BJ (cell line): ENCODE measurements at regions of chr17 and their contacts with region 1.

Region 1: GRCh38 chr17:41648411-41649195 is 24.2 kb upstream of the KRT17 start:
- DNase-seq: no peak
- H3K4me3 ChIP-seq: peak overlapping the region; percentile 36
- H3K27me3 ChIP-seq: no peaks in the 10 kb centered on the region
- CTCF ChIP-seq: peak; percentile 99

Region 2: GRCh38 chr17:40818733-40819527 is 829.7 kb before region 1 on chr17:
- CTCF ChIA-PET with region 1: interaction called, 10 read pairs
- POLR2A ChIA-PET with region 1: no interaction called
- DNase-seq: peak; percentile 10
- H3K4me3 ChIP-seq: peak overlapping the region; percentile 70
- H3K27me3 ChIP-seq: no peaks in the 10 kb centered on the region
- CTCF ChIP-seq: no peak

Region 3: DNA sequence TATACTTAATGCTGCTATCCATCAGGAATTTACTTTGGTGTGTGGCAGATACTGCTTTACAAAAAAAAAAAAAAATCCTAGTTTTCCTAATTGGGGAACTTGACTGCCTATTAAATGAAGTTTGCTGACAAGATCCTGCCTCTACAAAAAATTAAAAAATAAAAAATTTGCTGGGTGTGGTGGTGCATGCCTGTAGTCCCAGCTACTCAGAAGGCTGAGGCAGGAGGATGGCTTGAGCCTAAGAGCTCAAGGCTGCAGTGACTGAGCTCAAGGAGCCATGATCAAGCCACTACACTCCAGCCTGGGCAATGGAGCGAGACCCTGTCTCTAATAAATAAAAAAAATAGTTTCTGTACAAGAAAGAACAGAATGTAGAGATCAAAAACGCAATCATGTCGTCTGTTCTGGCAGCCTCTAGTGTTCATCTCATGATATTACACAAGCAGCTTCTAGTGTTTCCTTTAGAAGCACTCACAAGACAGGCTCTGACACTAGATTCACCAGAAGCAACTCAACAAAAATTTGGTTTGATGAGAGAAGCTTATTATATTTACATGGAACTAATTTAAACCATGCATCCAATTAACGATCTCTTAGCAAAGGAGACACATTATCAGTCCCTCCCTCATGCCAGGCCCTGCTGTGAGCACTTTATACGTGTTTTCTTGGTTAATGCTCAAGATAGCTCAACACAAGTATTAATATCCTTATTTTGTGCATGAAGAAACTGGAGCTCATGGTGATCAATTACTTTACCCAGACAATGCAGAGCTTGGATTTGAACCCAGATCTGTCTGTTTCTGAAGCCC is 326.3 kb before region 1 on chr17:
- CTCF ChIA-PET with region 1: interaction called, 14 read pairs
- POLR2A ChIA-PET with region 1: no interaction called
- DNase-seq: peak; percentile 38
- H3K4me3 ChIP-seq: no peak overlapping the region
- H3K27me3 ChIP-seq: no peaks in the 10 kb centered on the region
- CTCF ChIP-seq: peak; percentile 91

Region 4: GRCh38 chr17:41548844-41549595 is 99.6 kb before region 1 on chr17:
- CTCF ChIA-PET with region 1: interaction called, 343 read pairs
- POLR2A ChIA-PET with region 1: interaction called, 12 read pairs
- DNase-seq: no peak
- H3K4me3 ChIP-seq: no peak overlapping the region
- H3K27me3 ChIP-seq: no peaks in the 10 kb centered on the region
- CTCF ChIP-seq: peak; percentile 86

Region 5: GRCh38 chr17:41602524-41602923 is 46.1 kb before region 1 on chr17:
- CTCF ChIA-PET with region 1: interaction called, 14 read pairs
- POLR2A ChIA-PET with region 1: no interaction called
- DNase-seq: no peak
- H3K4me3 ChIP-seq: no peak overlapping the region
- H3K27me3 ChIP-seq: no peaks in the 10 kb centered on the region; the same call in 1 of the 2 replicates
- CTCF ChIP-seq: no peak

Region 6: DNA sequence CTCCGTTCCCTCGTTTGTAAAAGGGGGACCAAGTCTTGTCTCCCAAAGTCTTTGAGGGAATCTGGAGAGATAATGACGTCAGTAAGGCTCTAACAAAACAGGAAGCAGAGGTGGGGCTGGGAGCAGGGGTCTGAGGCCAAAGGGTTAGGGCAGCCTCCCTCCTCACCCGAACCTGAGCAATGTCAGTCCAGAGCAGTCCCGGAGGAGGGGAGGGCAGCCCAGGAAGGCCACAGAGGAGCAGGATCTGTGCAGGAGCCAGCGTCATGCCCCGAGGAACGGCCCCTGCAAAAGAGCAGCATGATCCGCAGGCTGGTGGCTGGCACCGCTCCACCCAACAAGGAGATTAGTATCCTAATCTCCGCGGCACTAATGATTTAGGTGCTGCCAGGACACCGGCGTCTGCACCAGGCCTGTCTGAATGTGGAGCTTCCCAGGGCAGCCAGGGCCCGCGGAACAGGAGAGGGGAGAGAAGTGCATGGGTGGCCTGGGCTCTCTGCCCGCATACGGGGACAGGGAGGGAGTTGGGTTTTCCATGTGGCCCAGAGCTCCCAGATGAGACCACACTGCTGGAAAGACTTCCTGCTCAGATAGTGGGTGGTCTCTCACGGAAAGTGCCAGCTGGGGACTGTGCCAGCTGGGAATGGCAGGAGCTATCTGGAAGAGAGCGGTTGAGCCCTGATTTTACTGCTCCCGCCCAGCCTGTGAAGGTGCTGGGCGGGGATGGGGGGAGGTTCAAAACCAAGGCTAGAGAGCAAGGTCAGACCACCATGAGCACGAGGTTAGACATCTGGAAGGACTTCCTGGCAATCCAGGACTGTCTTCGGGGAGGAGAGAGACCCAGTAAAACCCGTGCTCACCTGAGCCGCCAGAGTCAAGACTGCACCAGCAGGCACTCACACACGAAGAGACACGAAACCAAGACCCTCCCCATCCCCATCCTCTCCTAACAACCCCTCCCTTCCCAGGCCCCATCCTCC is 13.2 kb before region 1 on chr17:
- CTCF ChIA-PET with region 1: interaction called, 24 read pairs
- POLR2A ChIA-PET with region 1: no interaction called
- DNase-seq: no peak
- H3K4me3 ChIP-seq: no peak overlapping the region
- H3K27me3 ChIP-seq: no peaks in the 10 kb centered on the region
- CTCF ChIP-seq: no peak

Region 7: GRCh38 chr17:41695954-41696756 is 47.6 kb after region 1 on chr17:
- CTCF ChIA-PET with region 1: no interaction called
- POLR2A ChIA-PET with region 1: no interaction called
- DNase-seq: no peak
- H3K4me3 ChIP-seq: no peak overlapping the region
- H3K27me3 ChIP-seq: no peaks in the 10 kb centered on the region
- CTCF ChIP-seq: peak; percentile 83

Region 8: DNA sequence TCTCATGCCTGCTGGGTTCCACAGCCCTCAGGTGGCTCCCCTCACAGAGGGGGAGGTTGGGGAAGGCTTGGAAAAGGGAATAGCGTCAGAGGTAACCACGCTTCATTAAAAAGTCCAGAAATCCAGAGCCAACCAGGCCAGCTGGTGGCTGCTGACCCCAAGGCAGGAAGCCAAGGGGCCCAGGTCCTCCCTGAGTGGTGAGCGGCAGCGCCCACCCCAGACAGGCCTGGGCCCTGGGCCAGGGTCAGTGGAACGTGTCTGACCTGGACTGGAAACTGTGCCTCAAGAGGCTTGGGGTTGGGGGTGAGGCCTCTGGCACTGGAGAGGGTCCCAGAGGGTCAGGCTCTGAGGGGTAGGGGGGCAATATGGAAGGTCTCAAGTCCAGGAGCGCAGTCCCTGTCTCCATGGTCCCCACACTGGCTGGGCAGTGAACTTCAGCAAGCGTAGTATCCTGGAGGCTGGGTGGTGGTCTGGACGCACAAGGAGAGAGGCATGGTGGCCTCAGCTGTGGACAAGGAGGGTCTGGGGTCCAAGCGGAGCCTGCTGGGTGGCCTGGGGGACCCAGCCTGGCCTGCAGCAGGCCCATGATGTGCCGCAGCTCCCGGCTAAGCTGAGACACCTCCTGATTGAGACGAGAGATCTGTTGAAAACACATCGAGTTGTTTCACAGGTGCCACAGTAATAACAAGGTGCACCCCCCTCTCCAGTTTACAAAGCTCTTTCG is 511.4 kb after region 1 on chr17:
- CTCF ChIA-PET with region 1: no interaction called
- POLR2A ChIA-PET with region 1: interaction called, 20 read pairs
- DNase-seq: no peak
- H3K4me3 ChIP-seq: no peak overlapping the region
- H3K27me3 ChIP-seq: no peaks in the 10 kb centered on the region
- CTCF ChIP-seq: no peak

Region 9: DNA sequence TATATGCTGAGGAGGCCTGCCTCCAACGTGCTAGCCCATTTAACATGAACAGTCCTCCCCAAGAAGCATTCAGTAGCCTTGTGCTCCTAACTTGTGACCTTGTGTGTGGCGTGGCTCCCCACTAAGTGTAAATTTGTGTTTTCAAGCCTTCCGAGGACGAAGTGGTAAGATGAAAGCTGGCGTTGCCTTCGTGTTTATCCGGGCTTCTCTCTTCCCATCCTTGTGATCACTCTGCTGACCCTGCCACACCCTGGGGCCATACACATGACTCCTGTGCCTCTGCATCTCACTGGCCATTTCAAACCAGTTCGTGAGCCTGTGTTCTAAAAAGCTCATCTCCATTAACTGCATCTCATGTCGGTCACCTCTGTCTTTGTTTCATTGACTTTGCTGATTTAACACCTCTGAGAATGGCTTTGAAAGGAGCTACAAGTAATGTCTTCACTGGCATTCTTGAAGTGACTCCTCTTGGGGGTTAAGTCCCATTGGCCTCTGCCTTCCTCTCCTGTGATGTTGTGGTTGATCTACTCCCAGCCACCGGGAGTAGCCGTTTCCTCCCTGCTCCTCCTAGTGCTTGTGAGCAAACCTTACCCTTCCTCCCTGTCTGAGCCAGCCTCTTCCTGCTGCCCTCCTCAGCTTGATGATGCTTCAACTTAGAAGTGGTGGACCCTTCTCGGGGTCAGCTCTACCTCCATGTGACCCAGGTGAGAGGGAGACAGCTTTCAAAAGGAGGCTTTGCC is 860.0 kb after region 1 on chr17:
- CTCF ChIA-PET with region 1: no interaction called
- POLR2A ChIA-PET with region 1: no interaction called
- DNase-seq: no peak
- H3K4me3 ChIP-seq: no peak overlapping the region
- H3K27me3 ChIP-seq: no peaks in the 10 kb centered on the region
- CTCF ChIP-seq: no peak